AG04450 (cell line): ENCODE measurements at regions of chr15 and their contacts with region 1.

Region 1: GRCh38 chr15:45402162-45402954 is 24.0 kb upstream of the GATM start:
- DNase-seq: peak; percentile 98
- H3K4me3 ChIP-seq: peak overlapping the region; percentile 87
- H3K27ac ChIP-seq: peak overlapping the region; percentile 53
- H3K27me3 ChIP-seq: peaks cover 3% of the 10 kb centered on the region
- CTCF ChIP-seq: no peak

Region 2: DNA sequence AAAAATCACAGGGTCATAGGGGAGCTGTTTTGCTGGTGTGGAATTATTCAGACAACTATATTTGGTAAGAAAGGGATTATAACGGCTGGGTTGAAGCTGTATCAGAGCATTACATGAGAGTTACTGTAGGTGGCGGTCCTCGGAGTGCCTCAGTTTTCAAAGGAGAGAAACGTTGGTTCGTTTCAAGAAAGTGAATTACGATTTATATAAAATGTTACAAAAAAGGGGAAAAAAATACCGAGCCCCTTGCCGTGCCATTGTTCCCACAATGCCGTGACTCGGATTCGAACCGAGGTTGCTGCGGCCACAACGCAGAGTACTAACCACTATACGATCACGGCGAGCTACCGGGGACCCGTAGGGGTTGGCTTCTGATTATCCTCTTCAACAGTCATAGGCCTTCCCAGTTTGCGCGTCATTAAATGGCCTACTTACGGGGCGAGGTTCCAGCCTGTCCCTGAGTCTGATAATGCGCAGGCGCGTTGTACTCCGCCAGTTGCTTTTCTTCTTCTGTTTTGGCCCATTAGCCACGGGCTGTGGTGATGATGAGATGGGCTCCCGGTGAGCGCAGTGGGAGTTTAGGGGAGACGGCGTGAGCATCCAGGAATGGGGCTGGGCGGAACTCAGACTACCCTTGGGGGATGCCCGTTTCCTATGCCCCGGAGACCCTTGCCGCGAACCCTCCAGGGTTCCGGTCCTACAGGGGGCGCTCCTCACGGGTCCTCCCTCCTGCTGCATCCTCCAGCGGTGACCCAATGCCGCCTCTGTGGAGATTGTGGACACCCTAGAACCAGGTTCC is 203.8 kb before region 1 on chr15:
- CTCF ChIA-PET with region 1: interaction called, 15 read pairs
- POLR2A ChIA-PET with region 1: interaction called, 4 read pairs
- DNase-seq: peak; percentile 95
- H3K4me3 ChIP-seq: peak overlapping the region; percentile 94
- H3K27ac ChIP-seq: peak overlapping the region; percentile 92
- H3K27me3 ChIP-seq: no peaks in the 10 kb centered on the region
- CTCF ChIP-seq: peak; percentile 87

Region 3: GRCh38 chr15:45205192-45205591 is 197.2 kb before region 1 on chr15:
- CTCF ChIA-PET with region 1: interaction called, 56 read pairs
- POLR2A ChIA-PET with region 1: interaction called, 6 read pairs
- DNase-seq: peak; percentile 21
- H3K4me3 ChIP-seq: no peak overlapping the region
- H3K27ac ChIP-seq: no peak overlapping the region
- H3K27me3 ChIP-seq: peaks cover 3% of the 10 kb centered on the region
- CTCF ChIP-seq: peak; percentile 88

Region 4: DNA sequence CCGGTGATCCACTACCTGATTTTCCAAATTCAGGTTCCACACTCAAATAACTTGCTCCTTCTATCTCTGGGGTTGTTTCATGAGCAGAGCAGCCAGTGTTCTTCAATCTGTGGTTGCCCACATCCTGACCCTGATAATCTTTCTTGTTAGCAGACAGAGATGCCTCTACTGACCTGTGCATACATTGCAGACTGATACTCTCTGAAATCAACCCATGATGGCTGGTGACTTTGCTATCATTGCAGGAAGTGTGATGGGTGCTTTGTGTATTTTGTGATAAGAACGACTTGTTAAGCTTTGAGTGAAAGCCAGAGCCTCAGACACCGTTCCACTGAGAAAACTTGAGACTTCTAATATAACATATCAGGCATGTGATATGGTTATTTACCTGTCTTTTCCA is 63.9 kb before region 1 on chr15:
- CTCF ChIA-PET with region 1: no interaction called
- POLR2A ChIA-PET with region 1: no interaction called
- DNase-seq: no peak
- H3K4me3 ChIP-seq: no peak overlapping the region
- H3K27ac ChIP-seq: no peak overlapping the region
- H3K27me3 ChIP-seq: no peaks in the 10 kb centered on the region
- CTCF ChIP-seq: no peak

Region 5: DNA sequence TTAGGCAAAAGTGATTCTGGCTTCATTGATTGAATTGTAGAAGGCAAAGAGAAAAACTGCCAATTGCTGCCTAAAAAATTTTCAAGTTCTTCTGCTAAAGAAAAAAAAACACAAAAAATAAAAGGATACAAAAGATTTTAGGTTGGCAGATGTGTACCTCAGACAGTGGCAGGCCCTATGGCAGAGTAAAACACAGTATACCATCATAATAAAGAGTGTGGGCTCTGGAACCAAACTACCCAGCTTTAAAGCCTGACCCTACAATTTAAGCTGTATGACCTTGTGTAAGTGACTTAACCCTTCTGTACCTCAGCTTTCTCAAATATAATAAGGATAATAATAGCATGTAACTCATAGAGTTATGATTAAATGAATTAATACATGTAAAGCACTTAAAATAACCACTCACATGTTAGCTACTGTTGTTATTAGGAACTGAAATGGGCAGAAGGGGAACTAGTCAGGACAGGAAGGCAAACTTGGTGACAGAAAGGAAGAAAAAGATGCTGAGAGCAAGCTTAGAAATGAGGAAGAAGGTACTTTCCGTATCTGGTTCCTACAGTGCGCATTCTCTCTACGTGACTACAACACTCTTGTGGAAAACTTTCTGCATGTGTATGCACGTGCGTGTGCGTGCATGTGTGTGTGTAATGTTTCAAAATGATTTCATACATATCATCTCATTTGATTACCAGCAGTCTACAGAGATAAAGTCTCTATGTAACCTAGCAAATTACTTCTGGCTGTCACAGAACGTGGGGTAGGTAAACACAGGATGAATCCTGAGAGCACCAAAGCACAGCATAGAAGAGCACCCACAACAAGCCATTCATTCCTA is 10.4 kb before region 1 on chr15:
- CTCF ChIA-PET with region 1: interaction called, 13 read pairs
- POLR2A ChIA-PET with region 1: no interaction called
- DNase-seq: no peak
- H3K4me3 ChIP-seq: no peak overlapping the region
- H3K27ac ChIP-seq: no peak overlapping the region
- H3K27me3 ChIP-seq: peaks cover 9% of the 10 kb centered on the region
- CTCF ChIP-seq: no peak